Activated CD4-positive, alpha-beta T cell treated with anti-CD3 and anti-CD28 coated beads, Interleukin-2, amount 10 ng/mL, durations not matched to agents 24 days and 14 days (primary cell): ENCODE measurements at regions of chr5 and their contacts with region 1.

Region 1: GRCh38 chr5:138542956-138543729 is at the start of gene ETF1:
- DNase-seq: peak; percentile 100
- H3K4me3 Mint-ChIP-seq: peak within 1 kb of the TSS; percentile 99
- H3K27ac Mint-ChIP-seq: peak within 1 kb of the TSS; percentile 100
- H3K4me1 Mint-ChIP-seq: peaks cover 49% of the 10 kb centered on the region
- H3K27me3 Mint-ChIP-seq: no peaks in the 10 kb centered on the region
- total RNA-seq, gene ETF1: 200 and 205 TPM in 2 replicates

Region 2: GRCh38 chr5:138213161-138214029 is 329.7 kb before region 1 on chr5 and contains the start of gene CDC23:
- intact Hi-C with region 1: loop called (anchors 1 kb)
- DNase-seq: peak; percentile 98
- H3K4me3 Mint-ChIP-seq: peak within 1 kb of the TSS; percentile 97
- H3K27ac Mint-ChIP-seq: peak within 1 kb of the TSS; percentile 96
- H3K4me1 Mint-ChIP-seq: peaks cover 14% of the 10 kb centered on the region
- H3K27me3 Mint-ChIP-seq: no peaks in the 10 kb centered on the region
- total RNA-seq, gene CDC23: 46.6 and 47.9 TPM in 2 replicates

Region 3: DNA sequence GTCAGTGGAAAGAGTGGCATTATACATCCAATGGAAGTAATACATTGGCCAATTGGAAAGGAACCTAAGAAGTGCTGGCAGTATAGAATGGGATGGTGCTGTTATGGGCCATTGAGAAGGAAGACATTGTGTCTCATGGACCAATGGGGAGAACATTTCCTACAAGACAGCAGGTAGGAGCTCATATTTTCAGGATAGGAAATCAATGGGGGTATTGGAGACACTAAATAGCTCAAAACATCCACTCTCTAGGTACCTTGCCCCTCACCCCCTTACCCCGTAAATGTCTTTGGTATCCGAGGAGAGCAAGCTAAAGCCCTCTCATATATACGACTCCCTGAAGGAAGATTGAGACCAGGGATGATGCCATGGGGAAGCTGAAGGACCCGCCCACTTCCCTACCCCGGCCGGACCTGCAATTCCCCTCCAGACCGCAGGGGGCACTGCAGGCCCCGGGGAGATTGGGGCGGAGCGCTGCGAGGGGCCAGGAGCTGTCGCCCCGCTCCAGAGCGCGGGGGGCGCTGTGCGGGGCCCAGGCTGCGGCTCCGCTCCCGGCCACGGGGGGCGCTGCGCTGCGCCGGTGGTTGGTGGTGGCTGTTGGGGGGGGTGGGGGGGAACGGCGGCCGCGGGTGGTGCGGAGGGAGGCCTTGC is 190.9 kb before region 1 on chr5 and contains the start of gene KDM3B:
- intact Hi-C with region 1: loop called (anchors 1 kb)
- DNase-seq: peak; percentile 99
- H3K4me3 Mint-ChIP-seq: peak within 1 kb of the TSS; percentile 95
- H3K27ac Mint-ChIP-seq: peak within 1 kb of the TSS; percentile 95
- H3K4me1 Mint-ChIP-seq: peaks cover 37% of the 10 kb centered on the region
- H3K27me3 Mint-ChIP-seq: no peaks in the 10 kb centered on the region
- total RNA-seq, gene KDM3B: 48.7 and 52.7 TPM in 2 replicates

Region 4: DNA sequence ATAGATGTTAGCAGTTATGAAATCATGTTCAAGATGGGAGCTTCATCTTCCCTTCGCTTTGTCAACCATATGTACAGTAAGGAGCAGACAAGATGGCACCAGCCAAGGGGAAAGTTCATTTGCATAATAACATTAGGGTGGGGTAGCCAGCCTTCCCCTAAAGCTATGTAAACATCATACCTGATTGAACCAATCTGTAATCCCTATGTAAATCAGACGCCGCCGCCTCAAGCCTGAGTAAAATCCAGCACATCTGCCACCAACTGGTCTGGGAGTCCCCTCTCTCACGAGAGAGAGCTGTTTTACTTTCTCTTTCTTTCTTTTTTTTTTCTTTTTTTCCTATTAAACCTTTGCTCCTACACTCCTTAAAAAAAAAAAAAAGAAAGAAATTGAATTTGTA is 135.1 kb before region 1 on chr5:
- intact Hi-C with region 1: no loop called
- DNase-seq: peak; percentile 72
- H3K4me3 Mint-ChIP-seq: no peak overlapping the region
- H3K27ac Mint-ChIP-seq: no peak overlapping the region
- H3K4me1 Mint-ChIP-seq: peaks cover 6% of the 10 kb centered on the region
- H3K27me3 Mint-ChIP-seq: no peaks in the 10 kb centered on the region

Region 5: GRCh38 chr5:138464008-138464387 is 79.1 kb before region 1 on chr5:
- intact Hi-C with region 1: loop called (anchors 1 kb)
- DNase-seq: peak; percentile 98
- H3K4me3 Mint-ChIP-seq: peak overlapping the region; percentile 90
- H3K27ac Mint-ChIP-seq: peak overlapping the region; percentile 93
- H3K4me1 Mint-ChIP-seq: peaks cover 47% of the 10 kb centered on the region
- H3K27me3 Mint-ChIP-seq: peaks cover 6% of the 10 kb centered on the region

Region 6: DNA sequence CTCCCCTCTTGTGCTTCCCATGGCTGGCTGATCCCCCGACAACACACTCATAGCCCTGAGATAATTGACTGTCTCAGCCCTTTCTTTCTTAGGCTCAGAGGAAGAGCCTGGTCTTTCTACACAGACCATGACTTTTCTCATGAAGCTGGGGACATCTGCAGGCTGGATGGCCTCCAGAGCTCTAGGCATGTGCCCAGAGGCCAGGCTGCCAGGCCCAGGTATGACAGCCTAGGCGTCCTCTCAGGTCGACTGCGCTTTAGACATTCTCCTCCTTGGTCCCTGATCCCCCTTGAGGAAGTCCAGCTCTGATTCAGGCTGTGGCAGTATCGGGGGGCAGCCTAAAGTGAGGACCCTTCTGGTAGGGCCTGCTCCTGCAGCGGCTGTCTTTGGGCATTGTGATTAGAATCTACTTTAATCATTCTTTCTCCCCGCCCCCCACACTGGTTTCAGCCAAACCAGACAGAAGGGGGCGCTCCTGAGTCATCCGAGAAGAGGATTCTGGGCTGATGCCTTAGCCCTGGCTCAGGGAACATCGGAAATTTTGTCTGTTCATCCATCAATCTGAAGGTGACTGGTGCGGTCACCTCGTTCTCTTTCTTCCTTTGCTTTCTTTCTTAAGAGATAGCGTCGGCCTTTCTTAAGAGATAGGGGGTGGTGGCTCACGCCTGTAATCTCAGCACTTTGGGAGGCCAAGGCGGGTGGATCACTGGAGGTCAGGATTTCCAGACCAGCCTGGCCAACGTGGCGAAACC is 98.6 kb after region 1 on chr5:
- intact Hi-C with region 1: no loop called
- DNase-seq: peak; percentile 92
- H3K4me3 Mint-ChIP-seq: no peak overlapping the region
- H3K27ac Mint-ChIP-seq: no peak overlapping the region
- H3K4me1 Mint-ChIP-seq: peaks cover 2% of the 10 kb centered on the region
- H3K27me3 Mint-ChIP-seq: peaks cover 74% of the 10 kb centered on the region

Region 7: GRCh38 chr5:139293504-139294373 is 750.6 kb after region 1 on chr5 and contains the start of gene MATR3:
- intact Hi-C with region 1: loop called (anchors 1 kb)
- DNase-seq: peak; percentile 97
- H3K4me3 Mint-ChIP-seq: peak within 1 kb of the TSS; percentile 96
- H3K27ac Mint-ChIP-seq: peak within 1 kb of the TSS; percentile 97
- H3K4me1 Mint-ChIP-seq: peaks cover 38% of the 10 kb centered on the region
- H3K27me3 Mint-ChIP-seq: no peaks in the 10 kb centered on the region
- total RNA-seq, gene MATR3: 243 and 258 TPM in 2 replicates